ENCODE measurements at regions of chr1 and their contacts with region 1.

Region 1: DNA sequence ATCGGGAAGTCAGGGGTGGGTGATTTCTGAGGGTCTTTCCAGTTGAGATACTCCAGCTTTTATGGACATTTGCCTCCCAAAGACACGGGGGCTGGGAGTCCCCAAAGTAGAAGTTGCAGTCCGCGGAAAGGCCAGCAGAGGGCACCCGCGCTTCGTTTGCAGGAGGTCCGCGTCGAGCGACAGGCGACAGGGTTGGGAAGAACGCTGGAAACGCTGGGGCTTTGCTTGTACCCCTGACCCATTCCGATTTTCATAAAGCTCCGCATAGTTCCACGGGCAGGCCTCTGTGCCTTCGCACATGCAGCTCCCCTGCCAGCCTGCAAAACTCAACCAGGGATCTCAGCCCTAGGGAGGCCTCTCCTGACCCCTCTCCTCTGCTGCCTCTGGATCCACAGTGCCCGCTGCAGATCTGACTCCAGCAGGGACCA is 44.2 kb upstream of the LAPTM5 start:
- H3K4me3 ChIP-seq: no peak overlapping the region
- H3K27ac ChIP-seq: no peak overlapping the region
- H3K4me1 ChIP-seq: no peaks in the 10 kb centered on the region
- CTCF ChIP-seq: peak; percentile 88

Region 2: GRCh38 chr1:30618335-30618747 is 183.4 kb before region 1 on chr1:
- CTCF ChIA-PET with region 1: no interaction called
- POLR2A ChIA-PET with region 1: no interaction called
- H3K4me3 ChIP-seq: no peak overlapping the region
- H3K27ac ChIP-seq: no peak overlapping the region
- H3K4me1 ChIP-seq: no peaks in the 10 kb centered on the region
- CTCF ChIP-seq: no peak

Region 3: DNA sequence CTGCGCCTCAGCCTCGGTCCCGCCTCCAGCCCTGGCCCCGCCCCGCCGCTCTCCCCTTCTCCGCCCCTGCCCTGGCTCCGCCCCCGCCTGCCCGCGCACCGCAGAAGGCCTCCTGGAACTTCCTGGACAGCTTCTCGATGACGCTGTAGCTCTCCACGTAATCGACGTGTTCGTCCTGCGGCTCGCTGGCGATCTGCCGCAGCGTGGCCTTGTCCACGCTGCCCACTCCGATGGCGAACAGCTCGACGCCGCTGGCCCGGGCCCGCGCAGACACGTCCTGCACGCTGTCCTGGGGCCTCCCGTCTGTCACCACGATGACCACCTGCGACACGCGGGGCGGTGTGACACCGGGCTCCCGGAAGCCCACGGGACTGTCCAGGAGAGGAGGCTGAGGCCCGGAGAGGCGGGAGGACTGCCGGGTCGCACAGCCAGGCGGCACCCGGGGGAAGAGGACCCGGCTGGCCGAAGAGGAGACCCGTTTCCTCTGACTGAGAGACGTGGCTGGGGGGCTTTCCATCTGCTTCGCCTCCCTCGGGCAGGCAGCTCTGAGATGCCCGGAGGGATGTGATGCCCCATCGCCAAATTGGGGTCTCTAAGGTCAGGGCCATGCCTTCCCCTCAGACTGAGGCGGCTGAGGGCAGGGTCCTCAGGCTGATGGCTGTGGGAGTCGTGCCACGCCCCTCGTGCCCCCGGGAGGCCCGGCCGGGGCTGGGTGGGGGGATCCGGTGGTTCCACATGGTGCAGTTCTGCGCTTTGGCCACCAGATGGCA is 83.0 kb before region 1 on chr1:
- CTCF ChIA-PET with region 1: interaction called, 51 read pairs
- POLR2A ChIA-PET with region 1: no interaction called
- H3K4me3 ChIP-seq: peak overlapping the region; percentile 57
- H3K27ac ChIP-seq: peak overlapping the region; percentile 37; the same call in 1 of the 2 replicates
- H3K4me1 ChIP-seq: no peaks in the 10 kb centered on the region
- CTCF ChIP-seq: peak; percentile 96

Region 4: DNA sequence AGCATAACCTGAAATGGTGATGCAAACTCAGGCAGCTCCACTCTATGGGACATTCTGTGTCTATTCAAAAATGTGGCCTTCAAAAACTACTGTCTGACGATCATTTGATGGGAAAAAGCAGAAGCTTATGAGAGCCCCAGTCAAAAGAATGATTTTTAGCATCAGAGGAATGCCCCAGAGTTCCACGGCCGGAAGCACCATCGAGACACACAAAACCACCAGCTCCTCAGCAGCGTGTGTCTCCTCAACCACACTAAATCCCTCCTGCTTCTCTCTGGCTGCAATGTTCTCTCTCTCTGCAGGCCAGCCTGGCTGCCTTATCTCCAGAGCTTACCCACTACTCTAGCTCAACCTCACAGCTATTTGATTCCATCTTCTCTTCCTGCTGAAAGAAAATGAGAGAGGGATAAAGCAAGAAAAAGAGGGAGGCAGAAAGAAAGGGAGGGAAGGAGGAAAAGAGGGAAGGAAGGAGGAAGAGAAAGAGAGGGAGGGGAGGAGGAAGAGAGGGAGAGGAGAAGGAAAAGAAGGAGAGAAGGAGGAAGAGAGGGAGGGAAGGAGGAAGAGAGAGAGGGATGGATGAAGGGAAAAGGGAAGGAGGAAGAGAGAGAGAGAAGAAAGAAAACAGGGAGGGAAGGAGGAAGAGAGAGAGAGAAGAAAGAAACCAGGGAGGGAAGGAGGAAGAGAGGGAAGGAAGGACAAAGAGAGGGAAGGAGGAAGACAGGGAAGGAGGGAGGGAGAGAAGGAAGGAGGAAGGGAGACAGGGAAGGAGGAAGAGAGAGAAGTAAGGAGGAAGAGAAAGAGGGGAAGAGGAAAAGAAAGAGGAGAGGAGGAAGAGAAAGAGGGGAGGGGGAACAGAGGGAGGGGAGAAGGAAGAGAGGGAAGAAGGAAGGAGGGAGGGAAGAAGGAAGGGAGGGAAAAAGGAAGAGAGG is 10.7 kb before region 1 on chr1:
- CTCF ChIA-PET with region 1: interaction called, 32 read pairs
- POLR2A ChIA-PET with region 1: no interaction called
- H3K4me3 ChIP-seq: no peak overlapping the region
- H3K27ac ChIP-seq: no peak overlapping the region
- H3K4me1 ChIP-seq: no peaks in the 10 kb centered on the region
- CTCF ChIP-seq: no peak

Region 5: DNA sequence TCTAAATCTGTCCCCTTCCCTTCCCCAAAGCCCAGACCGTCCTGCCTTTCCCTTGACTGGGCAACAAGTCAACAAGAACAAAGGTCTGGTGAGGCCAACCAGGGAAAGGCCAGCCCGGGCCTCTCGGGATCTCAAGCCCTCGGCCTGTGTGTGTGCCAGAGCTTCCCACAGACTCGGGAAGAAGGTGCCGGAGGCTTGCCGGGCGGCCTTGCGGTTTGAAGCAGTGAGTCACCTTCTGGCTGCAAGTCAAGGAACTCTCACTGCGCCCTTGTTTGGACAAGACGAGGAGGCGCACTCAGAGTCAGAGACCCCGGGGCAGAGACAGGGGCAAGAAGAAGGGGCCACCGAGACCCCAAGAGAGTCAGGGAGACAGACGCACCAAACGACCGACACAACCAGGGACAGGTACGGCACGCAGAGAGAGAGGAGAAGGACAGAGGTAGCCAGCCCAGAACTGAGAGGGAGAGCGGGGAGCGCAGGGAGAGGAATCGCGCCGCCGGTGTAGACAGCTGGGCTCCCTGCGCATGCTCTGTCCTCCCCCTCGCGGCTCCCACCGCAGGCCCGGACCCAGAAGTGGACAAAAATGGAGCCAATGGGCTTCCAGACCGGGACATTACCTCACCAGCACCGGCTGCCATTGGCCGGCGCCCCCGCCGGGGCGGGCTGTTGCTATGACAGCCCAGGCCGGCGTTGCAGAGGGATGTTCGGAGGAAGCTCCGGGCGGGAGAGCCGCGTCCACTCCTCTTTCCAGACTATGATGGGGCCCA is 22.4 kb after region 1 on chr1:
- CTCF ChIA-PET with region 1: interaction called, 32 read pairs
- POLR2A ChIA-PET with region 1: interaction called, 4 read pairs
- H3K4me3 ChIP-seq: peak overlapping the region; percentile 48
- H3K27ac ChIP-seq: peak overlapping the region; percentile 95
- H3K4me1 ChIP-seq: peaks cover 6% of the 10 kb centered on the region
- CTCF ChIP-seq: peak; percentile 79

Region 6: DNA sequence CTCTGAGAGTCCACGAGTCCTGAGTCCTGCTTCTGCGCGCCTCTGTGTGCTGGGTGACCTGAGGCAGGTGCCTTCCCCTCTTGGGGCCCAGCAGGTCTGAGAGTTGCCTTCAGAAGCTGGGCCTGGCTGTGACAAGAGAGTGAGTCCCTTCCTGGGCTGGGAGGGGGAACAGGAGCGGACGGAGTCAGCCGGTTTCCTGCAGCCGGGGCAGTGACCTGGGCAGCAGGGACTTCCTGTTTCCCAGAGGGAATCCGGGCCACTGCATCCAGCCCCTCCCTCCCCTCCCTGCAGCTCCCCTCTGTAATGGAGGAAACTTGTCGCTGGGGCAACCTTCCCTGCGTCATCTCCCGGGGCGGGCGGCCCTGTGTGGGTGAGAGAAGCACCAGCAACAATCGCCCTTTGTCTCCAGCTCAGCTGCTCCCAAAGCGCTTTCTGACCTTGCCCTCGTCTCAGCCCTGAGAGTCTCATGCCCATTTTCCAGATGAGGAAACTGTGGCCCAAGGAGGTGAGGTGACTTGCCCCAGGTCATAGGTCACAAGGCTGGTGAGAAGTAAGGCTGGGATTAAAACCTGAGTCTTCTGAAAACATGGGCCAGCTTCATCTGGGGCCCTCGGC is 45.7 kb after region 1 on chr1:
- CTCF ChIA-PET with region 1: interaction called, 18 read pairs
- POLR2A ChIA-PET with region 1: no interaction called
- H3K4me3 ChIP-seq: no peak overlapping the region
- H3K27ac ChIP-seq: no peak overlapping the region
- H3K4me1 ChIP-seq: no peaks in the 10 kb centered on the region
- CTCF ChIP-seq: no peak

Region 7: GRCh38 chr1:30899577-30900389 is 98.0 kb after region 1 on chr1:
- CTCF ChIA-PET with region 1: interaction called, 56 read pairs
- POLR2A ChIA-PET with region 1: interaction called, 5 read pairs
- H3K4me3 ChIP-seq: no peak overlapping the region
- H3K27ac ChIP-seq: no peak overlapping the region
- H3K4me1 ChIP-seq: peaks cover 2% of the 10 kb centered on the region; the same call in 1 of the 2 replicates
- CTCF ChIP-seq: no peak

Region 8: GRCh38 chr1:30919025-30919881 is 117.5 kb after region 1 on chr1:
- CTCF ChIA-PET with region 1: interaction called, 434 read pairs
- POLR2A ChIA-PET with region 1: interaction called, 6 read pairs
- H3K4me3 ChIP-seq: no peak overlapping the region
- H3K27ac ChIP-seq: no peak overlapping the region
- H3K4me1 ChIP-seq: peaks cover 3% of the 10 kb centered on the region; the same call in 1 of the 2 replicates
- CTCF ChIP-seq: no peak

Measured in HEK293 (cell line).